Brain microvascular endothelial cell (primary cell): ENCODE measurements at regions of chr18 and their contacts with region 1.

Region 1: GRCh38 chr18:70205421-70206397 is at the start of gene RTTN:
- DNase-seq: peak; percentile 90
- H3K4me3 ChIP-seq: peak within 1 kb of the TSS; percentile 76
- H3K27ac ChIP-seq: peak within 1 kb of the TSS; percentile 87
- H3K27me3 ChIP-seq: no peaks in the 10 kb centered on the region
- CTCF ChIP-seq: no peak

Region 2: DNA sequence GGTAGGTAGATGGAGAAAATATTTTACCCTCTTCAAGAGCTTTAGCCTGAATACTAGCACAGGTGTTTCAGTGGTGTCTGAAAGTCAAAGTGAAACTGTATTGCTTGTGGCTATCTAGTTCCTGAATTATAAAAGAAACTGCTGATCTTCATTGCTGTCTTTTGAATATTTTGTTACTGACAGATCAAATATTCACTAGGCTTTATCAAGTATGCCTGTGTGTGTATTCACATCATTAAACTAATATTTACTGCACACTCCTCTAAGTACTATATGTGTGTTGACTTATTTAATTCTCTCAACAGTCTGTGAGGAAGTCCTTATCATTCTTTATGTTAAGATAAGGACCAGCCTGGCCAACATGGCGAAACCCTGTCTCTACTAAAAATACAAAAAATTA is 222.7 kb after region 1 on chr18:
- in situ Hi-C with region 1: loop called (anchors 25 kb)
- DNase-seq: no peak
- H3K4me3 ChIP-seq: no peak overlapping the region
- H3K27ac ChIP-seq: no peak overlapping the region
- H3K27me3 ChIP-seq: no peaks in the 10 kb centered on the region
- CTCF ChIP-seq: no peak